Posterior vena cava (tissue), 2 donors: ENCODE measurements at regions of chr9 and their contacts with region 1.

Region 1: DNA sequence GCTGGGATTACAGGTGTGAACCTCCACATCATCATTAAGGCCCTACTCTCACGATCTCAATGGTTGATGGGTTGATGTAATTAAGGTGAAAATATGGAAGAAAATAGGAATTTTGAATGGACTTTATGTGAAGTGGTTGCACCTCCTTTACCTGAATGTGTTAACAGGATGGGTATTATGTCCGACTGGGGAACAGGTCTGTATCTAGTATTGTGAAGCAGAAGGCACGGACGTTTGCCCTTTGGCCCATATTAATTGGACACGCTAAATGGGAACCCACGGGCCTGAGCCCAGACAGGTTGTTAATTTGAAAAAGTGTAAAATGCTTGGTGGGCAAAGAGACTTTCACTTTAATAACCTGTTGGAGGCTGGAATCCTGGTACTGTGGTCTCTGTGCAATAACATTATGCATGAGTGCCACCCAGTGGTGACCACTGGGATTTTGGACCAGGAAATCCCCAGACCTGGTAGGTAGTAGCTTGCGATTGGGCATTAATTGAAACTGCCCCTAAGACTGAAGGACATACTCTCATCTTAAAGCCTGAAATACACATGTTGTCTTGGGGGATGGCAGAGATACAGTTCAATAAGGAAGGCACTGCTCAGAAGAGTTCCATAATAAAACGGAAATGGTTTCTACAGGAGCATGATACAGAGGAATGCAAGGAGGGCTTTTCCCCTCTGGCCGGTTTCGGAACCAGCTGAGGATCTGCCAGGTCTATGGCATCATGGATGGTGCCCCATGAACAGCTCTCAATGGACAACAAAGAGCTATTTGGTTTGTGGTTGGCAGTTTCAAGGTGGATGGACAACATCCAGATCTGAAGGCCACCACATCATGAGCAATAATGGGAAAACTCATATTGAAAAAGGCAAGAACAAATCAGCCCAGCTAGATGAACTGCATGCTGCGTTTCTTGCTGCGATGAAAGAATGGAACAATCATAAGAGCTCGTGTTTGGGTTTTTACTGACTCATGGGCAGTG is 26.2 kb upstream of the BICD2 start:
- DNase-seq: no peak

Region 2: DNA sequence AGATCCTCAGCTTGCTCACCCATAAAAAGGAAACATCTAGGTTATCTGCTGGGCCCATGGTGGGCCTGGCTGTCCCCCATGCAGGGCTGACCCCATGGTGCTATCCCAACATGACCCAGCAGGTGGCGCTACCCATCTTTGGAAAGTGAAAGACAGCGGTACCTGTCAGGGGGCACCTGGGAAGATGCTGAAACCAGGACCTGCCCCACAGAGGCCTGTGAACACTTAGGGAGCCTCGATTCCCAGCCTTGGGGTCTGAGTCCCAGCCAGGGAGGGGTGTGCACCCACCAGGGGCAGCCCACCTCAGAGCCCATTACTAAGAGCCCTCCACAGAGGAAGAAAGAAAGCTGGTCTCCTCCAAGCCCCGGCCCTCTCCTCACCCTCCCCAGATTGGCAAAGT is 74.3 kb before region 1 on chr9:
- intact Hi-C with region 1: loop called (anchors 5 kb)
- DNase-seq: no peak